ENCODE measurements at regions of chr11 and their contacts with region 1.

Region 1: DNA sequence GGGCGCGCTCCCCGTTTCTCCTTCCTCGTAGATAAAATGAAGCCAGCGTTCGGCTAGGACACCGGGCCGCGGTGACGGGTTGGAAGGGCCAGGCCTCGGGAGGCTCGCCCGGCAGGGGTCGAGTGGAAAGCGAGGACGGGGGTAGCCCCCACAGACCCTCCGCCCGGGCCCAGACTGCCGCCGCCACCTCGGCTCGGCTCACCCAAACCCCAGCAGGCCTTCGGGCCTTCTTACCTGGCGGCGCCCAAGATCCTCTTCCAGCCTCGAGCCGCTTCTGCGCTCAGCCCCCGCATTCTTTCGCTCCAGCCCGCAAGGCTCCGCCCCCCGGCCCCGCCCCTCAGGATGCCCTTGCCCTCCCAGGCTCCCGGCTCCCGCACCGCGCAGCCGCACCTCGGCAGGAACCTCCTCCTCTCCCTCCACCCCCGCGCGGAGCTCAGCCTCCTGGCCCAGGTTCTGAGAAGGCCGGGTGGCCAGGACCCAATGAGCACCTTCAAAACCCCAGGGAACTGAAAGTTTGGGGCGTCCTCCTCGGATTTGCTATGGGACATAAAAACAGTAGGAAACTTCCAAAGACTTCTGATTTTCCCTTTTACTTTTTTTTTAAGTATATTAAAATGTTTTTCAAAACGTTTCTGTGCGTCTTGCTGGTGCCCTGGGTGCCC is at the start of gene CD59:
- DNase-seq: peak; percentile 57
- H3K4me3 ChIP-seq: peak within 1 kb of the TSS; percentile 85
- H3K27me3 ChIP-seq: no peaks in the 10 kb centered on the region
- CTCF ChIP-seq: 0 out of 2 replicates have a peak, but pooled peaks have one; percentile 1
- polyA plus RNA-seq, gene CD59: 1,025 and 1,348 TPM in 2 replicates

Region 2: DNA sequence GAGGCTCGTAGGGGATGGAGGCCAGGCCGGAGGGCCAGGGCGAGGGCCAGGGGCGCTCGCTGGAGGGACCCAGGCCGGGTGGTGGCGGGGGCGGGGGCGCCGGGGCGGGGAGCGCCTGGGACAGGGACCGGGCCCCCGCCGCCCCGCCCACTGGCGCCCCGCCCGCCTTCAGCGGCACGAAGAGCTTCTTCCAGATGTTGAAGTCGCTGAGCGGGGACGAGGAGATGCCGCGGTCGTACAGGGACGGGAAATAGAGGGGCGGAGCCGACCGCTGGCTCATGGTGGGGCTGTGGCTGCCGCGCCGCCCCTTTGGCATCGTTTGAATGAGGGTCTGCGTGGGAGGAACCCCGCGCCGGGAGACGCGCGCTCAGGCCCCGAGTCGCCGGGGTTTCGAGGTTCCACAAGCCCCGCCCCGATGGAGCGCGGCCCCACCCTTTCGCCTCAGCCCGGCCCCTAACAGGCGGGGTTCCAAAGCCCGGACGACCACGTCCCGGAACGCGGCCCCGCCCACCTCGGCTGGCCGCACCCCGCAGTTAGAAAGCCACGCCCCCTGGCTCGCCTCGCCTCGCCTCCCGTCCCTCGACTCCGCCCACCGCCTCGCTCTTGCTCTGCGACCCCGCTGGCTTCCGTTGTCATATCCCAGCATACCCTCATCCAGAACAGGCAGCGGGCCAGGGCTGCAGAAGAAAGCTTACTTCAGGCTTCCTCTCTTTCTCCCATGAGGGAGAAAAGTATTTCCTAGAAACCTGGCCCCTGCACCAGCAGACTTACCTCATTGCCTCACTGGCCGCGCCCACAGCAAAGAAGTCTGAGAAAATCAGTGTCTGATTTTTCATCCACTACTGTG is 35.6 kb before region 1 on chr11 and contains the start of gene C11orf91:
- CTCF ChIA-PET with region 1: interaction called, 4 read pairs
- POLR2A ChIA-PET with region 1: interaction called, 23 read pairs
- DNase-seq: peak; percentile 85
- H3K4me3 ChIP-seq: peak within 1 kb of the TSS; percentile 51
- H3K27me3 ChIP-seq: no peaks in the 10 kb centered on the region
- CTCF ChIP-seq: no peak
- polyA plus RNA-seq, gene C11orf91: not detected in 2 replicates

Region 3: DNA sequence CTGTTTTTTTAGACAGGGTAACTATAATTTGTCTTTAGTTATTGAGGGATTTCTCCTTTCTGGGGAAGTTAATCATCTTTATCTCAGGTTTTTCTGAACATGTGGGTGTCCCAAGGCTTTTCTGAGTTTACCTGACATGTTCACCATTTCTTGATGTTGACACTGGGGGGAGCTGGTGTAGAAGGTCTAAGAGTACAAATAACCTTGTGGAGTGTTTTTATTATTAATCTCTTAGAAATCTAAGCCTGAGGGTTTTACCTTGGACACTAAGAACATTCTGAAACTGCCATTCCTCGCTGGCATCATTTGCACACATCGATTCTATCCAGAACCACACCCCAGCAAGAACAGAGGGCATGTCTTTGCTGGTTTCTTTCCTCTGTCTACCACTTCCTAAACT is 20.0 kb before region 1 on chr11:
- CTCF ChIA-PET with region 1: interaction called, 11 read pairs
- POLR2A ChIA-PET with region 1: no interaction called
- DNase-seq: no peak
- H3K4me3 ChIP-seq: no peak overlapping the region
- H3K27me3 ChIP-seq: no peaks in the 10 kb centered on the region
- CTCF ChIP-seq: peak; percentile 39

Region 4: GRCh38 chr11:33772300-33772699 is 36.0 kb after region 1 on chr11:
- CTCF ChIA-PET with region 1: interaction called, 3 read pairs
- POLR2A ChIA-PET with region 1: interaction called, 12 read pairs
- DNase-seq: no peak
- H3K4me3 ChIP-seq: no peak overlapping the region
- H3K27me3 ChIP-seq: no peaks in the 10 kb centered on the region
- CTCF ChIP-seq: no peak

Measured in BJ (cell line).